ENCODE measurements at regions of chr1 and their contacts with region 1.

Region 1: GRCh38 chr1:2412519-2413233 is at the start of gene PEX10:
- DNase-seq: peak; percentile 97
- H3K4me3 ChIP-seq: peak within 1 kb of the TSS; percentile 98
- H3K27ac ChIP-seq: peak within 1 kb of the TSS; percentile 73
- H3K4me1 ChIP-seq: peaks cover 48% of the 10 kb centered on the region
- CTCF ChIP-seq: no peak
- total RNA-seq, gene PEX10: 22.6 and 23.3 TPM in 2 replicates

Region 2: DNA sequence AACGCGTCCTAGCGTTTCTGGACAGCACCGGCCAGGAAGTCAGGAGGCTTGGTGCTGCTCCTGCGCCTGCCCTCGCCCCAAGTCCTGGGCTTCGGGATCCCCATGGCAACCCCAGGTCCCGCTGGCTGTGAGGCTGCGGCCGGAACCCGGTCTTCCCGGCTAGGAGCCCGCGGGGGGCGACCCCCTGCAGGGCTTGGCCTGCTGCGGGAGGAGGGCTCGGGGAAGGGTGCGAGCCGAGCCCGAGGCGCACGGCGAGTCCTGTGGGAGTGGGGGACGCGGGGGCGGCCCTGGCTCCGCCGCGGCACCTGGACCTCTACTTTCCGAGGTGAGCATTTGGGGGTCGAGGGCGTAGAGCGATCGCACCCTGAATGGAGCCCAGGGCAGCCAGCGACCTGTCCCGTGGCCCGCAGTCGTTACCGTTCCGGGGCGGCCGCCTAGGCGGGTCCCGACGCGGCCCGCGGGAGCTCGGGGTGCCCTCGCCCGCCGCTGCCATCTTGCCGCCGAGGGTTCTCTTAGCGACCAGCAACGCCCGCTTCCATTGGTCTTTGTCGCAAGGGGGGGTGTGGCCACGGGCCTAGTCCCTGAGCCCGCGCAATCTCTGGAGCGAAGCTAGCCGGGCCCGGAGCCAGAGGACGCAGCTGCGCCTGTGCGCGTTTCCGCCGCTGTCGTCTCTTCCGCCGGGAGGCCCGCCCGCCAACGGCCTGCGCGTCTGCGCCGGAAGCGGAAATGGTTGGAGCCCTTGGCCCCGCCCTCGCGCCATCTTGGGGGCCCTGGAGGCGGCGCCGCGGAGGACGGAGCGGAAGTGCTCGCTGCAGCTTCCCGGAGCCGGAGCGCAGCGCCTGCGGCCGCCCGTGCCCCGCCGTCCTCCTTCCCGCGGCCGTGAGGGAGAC is 21.4 kb before region 1 on chr1 and contains the starts of genes MORN1 and RER1:
- CTCF ChIA-PET with region 1: no interaction called
- POLR2A ChIA-PET with region 1: no interaction called
- intact Hi-C with region 1: loop called (anchors 1 kb)
- DNase-seq: peak; percentile 99
- H3K4me3 ChIP-seq: peak within 1 kb of the TSS; percentile 87
- H3K27ac ChIP-seq: peak within 1 kb of the TSS; percentile 70
- H3K4me1 ChIP-seq: peaks cover 53% of the 10 kb centered on the region
- CTCF ChIP-seq: no peak
- total RNA-seq, gene MORN1: 13.1 and 19.4 TPM in 2 replicates
- total RNA-seq, gene RER1: 54.4 and 60.5 TPM in 2 replicates

Region 3: GRCh38 chr1:2494323-2494693 is 81.6 kb after region 1 on chr1:
- CTCF ChIA-PET with region 1: interaction called, 3 read pairs
- POLR2A ChIA-PET with region 1: no interaction called
- intact Hi-C with region 1: loop called (anchors 1 kb)
- DNase-seq: peak; percentile 43
- H3K4me3 ChIP-seq: no peak overlapping the region
- H3K27ac ChIP-seq: no peak overlapping the region
- H3K4me1 ChIP-seq: peaks cover 80% of the 10 kb centered on the region
- CTCF ChIP-seq: no peak

Region 4: DNA sequence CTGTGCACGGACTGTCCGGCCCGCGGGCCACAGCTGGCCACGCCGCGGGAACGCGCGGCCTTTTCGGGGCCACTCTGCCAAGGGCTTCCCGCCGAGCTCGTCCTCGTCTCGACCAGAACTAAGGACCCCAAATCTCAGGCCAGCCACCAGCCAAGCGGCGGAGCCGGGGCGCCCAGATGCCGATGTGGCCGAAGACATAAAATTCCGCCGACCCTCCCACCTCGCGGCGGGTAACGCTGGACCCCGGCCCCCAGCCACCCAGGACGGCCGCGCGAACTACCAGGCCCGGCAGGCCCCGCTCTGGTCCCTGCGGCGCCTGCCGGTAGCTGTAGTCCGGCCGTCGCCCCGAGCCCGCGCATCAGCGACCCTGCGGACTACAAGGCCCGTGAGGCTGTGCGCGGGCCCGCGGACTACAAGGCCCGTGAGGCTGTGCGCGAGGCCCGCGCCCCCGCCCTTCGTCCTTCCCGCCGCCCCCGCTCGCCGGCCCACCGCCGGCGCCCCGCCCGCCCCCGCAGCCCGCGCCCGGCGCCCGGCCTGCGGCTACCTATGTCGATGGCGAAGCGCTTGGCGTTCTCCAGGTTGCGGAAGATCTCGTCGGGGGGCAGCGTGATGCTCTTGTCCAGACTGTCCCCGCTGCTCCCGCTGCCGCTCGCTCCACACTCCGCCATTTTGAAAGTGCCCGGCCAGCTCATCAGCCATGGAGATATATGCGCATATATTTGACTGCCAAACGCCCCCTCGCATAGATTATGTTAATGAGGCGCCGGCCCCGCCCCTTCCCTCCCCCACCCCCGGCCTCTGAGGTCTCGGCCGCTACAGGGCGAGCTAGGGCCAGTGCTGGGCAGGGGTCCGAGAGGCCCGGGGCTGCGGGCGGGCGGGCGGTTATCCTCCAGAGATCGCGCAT is 113.5 kb after region 1 on chr1 and contains the start of gene PANK4:
- CTCF ChIA-PET with region 1: no interaction called
- POLR2A ChIA-PET with region 1: no interaction called
- intact Hi-C with region 1: loop called (anchors 1 kb)
- DNase-seq: peak; percentile 96
- H3K4me3 ChIP-seq: peak within 1 kb of the TSS; percentile 100
- H3K27ac ChIP-seq: peak within 1 kb of the TSS; percentile 38
- H3K4me1 ChIP-seq: peaks cover 26% of the 10 kb centered on the region
- CTCF ChIP-seq: no peak
- total RNA-seq, gene PANK4: 43.6 and 55.9 TPM in 2 replicates

Region 5: GRCh38 chr1:2586154-2587070 is 173.7 kb after region 1 on chr1 and contains the start of gene PRXL2B:
- CTCF ChIA-PET with region 1: no interaction called
- POLR2A ChIA-PET with region 1: interaction called, 5 read pairs
- intact Hi-C with region 1: loop called (anchors 2 kb)
- DNase-seq: peak; percentile 94
- H3K4me3 ChIP-seq: peak within 1 kb of the TSS; percentile 90
- H3K27ac ChIP-seq: peak within 1 kb of the TSS; percentile 89
- H3K4me1 ChIP-seq: peaks cover 33% of the 10 kb centered on the region
- CTCF ChIP-seq: no peak
- total RNA-seq, gene PRXL2B: 7.0 and 10.4 TPM in 2 replicates